ENCODE measurements at regions of chr13 and their contacts with region 1.

Region 1: GRCh38 chr13:110915057-110915873 is at the start of gene ANKRD10:
- DNase-seq: peak; percentile 98
- ATAC-seq: peak; percentile 84
- H3K4me3 Mint-ChIP-seq: peak within 1 kb of the TSS; percentile 90
- H3K27ac Mint-ChIP-seq: peak within 1 kb of the TSS; percentile 91
- H3K4me1 Mint-ChIP-seq: peaks cover 42% of the 10 kb centered on the region
- H3K27me3 Mint-ChIP-seq: no peaks in the 10 kb centered on the region
- total RNA-seq, gene ANKRD10: 120 to 143 TPM

Region 2: DNA sequence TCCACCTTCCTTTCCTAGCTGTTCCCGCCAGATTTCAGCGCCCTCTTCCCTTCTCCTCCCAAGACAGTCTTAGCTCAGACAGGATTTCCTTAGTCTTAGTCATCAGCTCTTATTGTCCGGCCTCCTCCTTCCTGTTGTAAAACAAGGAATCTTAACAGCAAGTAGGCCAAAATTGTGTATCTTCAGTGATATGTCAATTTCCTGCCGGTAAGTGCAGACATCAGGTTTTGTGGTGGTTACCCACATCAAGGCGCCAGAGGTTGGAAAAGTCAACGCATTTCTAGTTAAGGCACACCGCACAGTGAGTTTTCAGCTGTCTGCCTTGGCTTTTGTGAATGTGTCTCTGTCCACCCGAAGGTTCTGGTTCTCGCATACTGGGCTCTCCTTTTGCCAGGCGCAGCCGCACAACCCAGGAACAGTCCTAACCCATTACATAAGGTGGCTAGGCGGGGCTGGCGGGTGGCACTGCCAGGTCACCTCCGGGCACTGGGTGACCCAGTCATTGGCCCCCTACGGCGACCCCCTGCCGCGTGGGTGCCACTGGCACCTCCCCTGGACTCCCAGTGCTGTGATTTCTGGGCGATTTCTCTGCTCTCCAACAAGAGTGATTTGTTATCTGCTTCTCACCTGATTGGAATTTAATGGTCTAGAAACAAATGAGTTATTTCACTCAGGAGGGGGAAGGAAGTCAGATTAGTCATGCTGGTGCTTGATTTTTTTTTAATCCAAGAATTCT is 595.3 kb before region 1 on chr13:
- CTCF ChIA-PET with region 1: no interaction called
- DNase-seq: no peak
- ATAC-seq: no peak
- H3K4me3 Mint-ChIP-seq: no peak overlapping the region
- H3K27ac Mint-ChIP-seq: no peak overlapping the region
- H3K4me1 Mint-ChIP-seq: peaks cover 3% of the 10 kb centered on the region
- H3K27me3 Mint-ChIP-seq: peaks cover 23% of the 10 kb centered on the region

Region 3: DNA sequence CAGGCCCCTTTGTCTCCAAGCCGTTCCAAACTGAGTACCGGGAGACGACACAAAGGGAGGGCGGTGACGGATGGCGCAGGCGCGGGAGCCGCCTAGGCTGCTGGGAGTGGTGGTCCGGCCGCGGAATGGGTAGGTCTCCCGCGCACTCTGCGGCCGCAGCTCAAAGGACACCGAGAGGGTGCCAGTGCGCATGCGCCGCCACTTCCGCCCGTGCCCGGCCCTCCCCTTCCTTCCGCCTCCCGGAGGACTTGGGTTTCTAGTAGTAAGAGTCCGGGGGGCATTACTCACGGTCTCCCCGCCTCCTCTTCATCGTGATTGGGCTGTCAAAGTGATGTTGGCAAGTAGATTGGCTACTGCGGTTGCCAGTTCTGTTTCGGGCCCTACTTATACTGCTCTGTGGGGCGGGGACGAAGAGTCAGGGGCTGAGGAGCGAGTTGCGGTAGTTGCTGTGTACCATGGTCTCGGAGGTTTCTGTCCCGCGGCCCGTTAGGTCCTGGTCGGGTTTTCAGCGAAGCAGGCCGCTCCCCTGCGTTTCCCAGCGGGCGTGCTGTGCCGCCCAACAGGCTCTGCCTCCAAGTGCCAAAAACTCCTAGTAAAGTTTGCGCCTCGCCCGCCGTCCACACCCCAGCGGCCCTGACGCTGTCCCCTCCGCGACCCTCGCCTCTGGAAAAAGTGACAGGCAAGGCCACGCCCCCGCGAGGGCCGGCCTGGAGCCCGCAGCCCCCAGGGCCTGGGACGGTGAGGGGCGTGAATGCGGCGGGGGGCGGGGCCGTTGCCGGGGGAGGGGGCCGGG is 202.2 kb before region 1 on chr13:
- CTCF ChIA-PET with region 1: interaction called, 10 read pairs
- DNase-seq: peak; percentile 100
- ATAC-seq: peak; percentile 56
- H3K4me3 Mint-ChIP-seq: peak overlapping the region; percentile 90
- H3K27ac Mint-ChIP-seq: peak overlapping the region; percentile 98
- H3K4me1 Mint-ChIP-seq: peaks cover 28% of the 10 kb centered on the region
- H3K27me3 Mint-ChIP-seq: no peaks in the 10 kb centered on the region

Region 4: DNA sequence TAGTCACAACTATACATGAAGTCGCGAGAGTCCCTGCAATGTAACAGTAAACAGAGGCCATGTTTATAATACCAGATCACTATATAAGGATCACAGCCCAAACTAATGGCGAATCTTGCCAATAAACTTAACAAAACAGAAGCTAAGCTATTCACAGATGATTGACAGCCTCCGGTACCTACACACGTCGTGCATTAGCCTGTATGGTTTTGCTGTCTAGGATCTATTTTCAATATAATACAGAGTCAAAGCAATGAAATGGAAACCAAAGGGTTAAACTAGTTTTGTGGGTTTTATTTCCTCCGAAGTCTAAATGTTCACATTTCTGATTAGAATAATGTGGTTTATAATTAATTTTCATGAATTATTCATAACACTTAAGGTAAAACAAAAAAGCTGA is 10.5 kb before region 1 on chr13:
- CTCF ChIA-PET with region 1: interaction called, 15 read pairs
- DNase-seq: no peak
- ATAC-seq: no peak
- H3K4me3 Mint-ChIP-seq: no peak overlapping the region
- H3K27ac Mint-ChIP-seq: no peak overlapping the region
- H3K4me1 Mint-ChIP-seq: peaks cover 34% of the 10 kb centered on the region
- H3K27me3 Mint-ChIP-seq: no peaks in the 10 kb centered on the region

Region 5: DNA sequence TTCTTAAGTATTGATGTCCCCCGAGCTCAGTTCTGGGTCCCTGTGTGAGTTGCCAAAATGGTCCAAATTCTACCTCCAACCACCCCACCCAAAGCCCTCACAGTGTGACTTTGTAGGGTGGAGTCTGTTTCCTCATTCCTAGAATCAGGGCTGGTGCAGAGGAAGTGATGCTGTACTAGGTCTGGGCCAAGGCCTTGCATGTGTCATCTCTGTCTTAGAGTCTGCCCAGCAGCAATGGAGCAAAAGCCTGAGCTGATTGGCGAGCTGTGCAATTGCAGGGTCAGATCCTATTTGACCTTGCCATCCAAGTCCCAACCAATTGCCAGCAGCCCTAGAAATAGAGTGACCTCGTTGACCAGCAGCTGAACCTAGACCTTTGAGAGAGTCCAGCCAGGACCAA is 96.6 kb after region 1 on chr13:
- CTCF ChIA-PET with region 1: interaction called, 14 read pairs
- DNase-seq: peak; percentile 80
- ATAC-seq: peak; percentile 99
- H3K4me3 Mint-ChIP-seq: no peak overlapping the region
- H3K27ac Mint-ChIP-seq: peak overlapping the region; percentile 87
- H3K4me1 Mint-ChIP-seq: peaks cover 44% of the 10 kb centered on the region
- H3K27me3 Mint-ChIP-seq: peaks cover 17% of the 10 kb centered on the region

Region 6: GRCh38 chr13:111093136-111093535 is 177.9 kb after region 1 on chr13:
- CTCF ChIA-PET with region 1: no interaction called
- DNase-seq: no peak
- ATAC-seq: no peak
- H3K4me3 Mint-ChIP-seq: no peak overlapping the region
- H3K27ac Mint-ChIP-seq: no peak overlapping the region
- H3K4me1 Mint-ChIP-seq: no peaks in the 10 kb centered on the region
- H3K27me3 Mint-ChIP-seq: peaks cover 40% of the 10 kb centered on the region

Region 7: DNA sequence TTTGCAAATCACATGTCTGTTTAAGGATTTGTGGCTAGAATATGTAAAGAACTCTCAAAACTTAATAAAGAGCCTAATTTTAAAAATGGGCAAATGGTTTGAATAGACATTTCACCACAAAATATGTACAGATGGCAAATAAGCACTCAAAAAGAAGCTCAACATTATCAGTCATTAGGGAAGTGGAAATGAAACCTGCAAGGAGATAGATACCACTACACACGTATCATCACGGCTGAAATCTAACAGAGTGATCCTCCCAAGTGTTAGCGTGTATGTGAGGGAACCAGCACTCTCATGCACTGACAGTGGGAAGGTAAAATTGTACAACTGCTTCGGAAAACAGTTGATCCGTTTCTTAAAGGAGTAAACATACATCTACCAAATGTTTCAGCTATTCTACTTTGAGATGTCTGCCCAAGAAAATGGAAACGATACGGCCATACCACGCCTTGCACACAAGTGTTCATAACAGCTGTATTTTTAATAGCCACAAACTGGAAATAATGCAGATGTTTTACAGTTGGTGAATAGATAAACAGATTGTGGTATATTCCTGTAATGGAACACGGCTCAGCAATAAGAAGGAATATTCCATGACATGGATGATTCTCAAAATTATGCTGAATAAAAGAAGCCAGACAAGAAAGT is 214.3 kb after region 1 on chr13:
- CTCF ChIA-PET with region 1: no interaction called
- DNase-seq: no peak
- ATAC-seq: no peak
- H3K4me3 Mint-ChIP-seq: no peak overlapping the region
- H3K27ac Mint-ChIP-seq: no peak overlapping the region
- H3K4me1 Mint-ChIP-seq: no peaks in the 10 kb centered on the region
- H3K27me3 Mint-ChIP-seq: peaks cover 33% of the 10 kb centered on the region